CD4-positive, alpha-beta memory T cell (primary cell): ENCODE measurements at regions of chr17 and their contacts with region 1.

Region 1: GRCh38 chr17:75182569-75183450 is at the start of gene SUMO2:
- DNase-seq: peak; percentile 92 to 95 (median 94)
- H3K4me3 ChIP-seq: peak within 1 kb of the TSS; percentile 52 to 93
- H3K4me3 Mint-ChIP-seq: peak within 1 kb of the TSS; percentile 89 to 97 (median 92)
- H3K27ac ChIP-seq: peak within 1 kb of the TSS; percentile 94
- H3K27ac Mint-ChIP-seq: peak within 1 kb of the TSS; percentile 87 to 98 (median 97)
- H3K4me1 ChIP-seq: peaks cover 44% of the 10 kb centered on the region
- H3K4me1 Mint-ChIP-seq: peaks cover 20 to 47% (median 35%) of the 10 kb centered on the region in 4 donors
- H3K27me3 ChIP-seq: no peaks in the 10 kb centered on the region
- H3K27me3 Mint-ChIP-seq: no peaks in the 10 kb centered on the region
- total RNA-seq, gene SUMO2: 255 to 264 TPM

Region 2: GRCh38 chr17:75046582-75047289 is 136.1 kb before region 1 on chr17 and contains the starts of genes ATP5PD and KCTD2:
- CTCF ChIA-PET with region 1: no interaction called
- POLR2A ChIA-PET with region 1: interaction called, 11 read pairs
- intact Hi-C with region 1: no loop called
- DNase-seq: peak; percentile 92 to 95 (median 94)
- H3K4me3 ChIP-seq: peak within 1 kb of the TSS; percentile 62 to 96
- H3K4me3 Mint-ChIP-seq: peak within 1 kb of the TSS; percentile 95 to 100 (median 97)
- H3K27ac ChIP-seq: peak within 1 kb of the TSS; percentile 85
- H3K27ac Mint-ChIP-seq: peak within 1 kb of the TSS; percentile 96 to 98 (median 97)
- H3K4me1 ChIP-seq: peaks cover 30% of the 10 kb centered on the region
- H3K4me1 Mint-ChIP-seq: peaks cover 25 to 63% (median 40%) of the 10 kb centered on the region in 4 donors
- H3K27me3 ChIP-seq: no peaks in the 10 kb centered on the region
- H3K27me3 Mint-ChIP-seq: no peaks in the 10 kb centered on the region
- total RNA-seq, gene ATP5PD: 167 to 171 TPM
- total RNA-seq, gene KCTD2: 31.1 to 31.7 TPM

Region 3: DNA sequence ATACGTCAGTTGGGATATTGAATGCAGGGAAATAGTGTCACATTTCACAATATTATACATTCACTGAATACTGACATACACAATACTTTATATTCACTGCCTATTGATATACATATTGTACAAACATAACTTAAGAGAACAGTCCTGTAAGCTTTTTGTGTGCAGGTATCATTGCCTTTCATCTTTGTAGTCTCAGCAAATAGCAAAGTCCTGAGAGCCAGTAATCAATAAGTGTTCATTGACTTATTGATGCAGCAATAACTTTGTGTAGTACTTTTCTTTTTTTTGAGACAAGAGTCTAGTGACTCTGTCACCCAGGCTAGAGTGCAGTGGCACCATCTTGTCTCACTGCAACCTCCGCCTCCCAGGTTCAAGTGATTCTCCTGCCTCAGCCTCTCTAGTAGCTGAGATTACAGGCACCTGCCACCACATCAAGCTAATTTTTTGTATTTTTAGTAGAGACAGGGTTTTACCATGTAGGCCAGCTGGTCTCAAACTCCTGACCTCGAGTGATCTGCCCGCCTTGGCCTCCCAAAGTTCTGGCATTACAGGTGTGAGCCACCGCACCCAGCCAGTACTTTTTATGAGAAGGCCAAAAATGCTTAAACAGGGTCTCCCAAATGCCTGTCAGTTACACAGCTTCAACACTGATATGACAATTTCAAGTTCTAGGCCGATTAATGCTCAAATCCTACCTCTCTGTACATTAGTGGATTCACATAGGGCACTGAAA is 17.2 kb after region 1 on chr17:
- CTCF ChIA-PET with region 1: interaction called, 63 read pairs
- POLR2A ChIA-PET with region 1: interaction called, 9 read pairs
- intact Hi-C with region 1: loop called (anchors 1 kb)
- DNase-seq: no peak
- H3K4me3 ChIP-seq: no peak overlapping the region
- H3K4me3 Mint-ChIP-seq: no peak overlapping the region
- H3K27ac ChIP-seq: no peak overlapping the region
- H3K27ac Mint-ChIP-seq: no peak overlapping the region
- H3K4me1 ChIP-seq: peaks cover 10% of the 10 kb centered on the region
- H3K4me1 Mint-ChIP-seq: peaks cover 4 to 16% (median 7%) of the 10 kb centered on the region in 4 donors
- H3K27me3 ChIP-seq: no peaks in the 10 kb centered on the region
- H3K27me3 Mint-ChIP-seq: no peaks in the 10 kb centered on the region

Region 4: GRCh38 chr17:75238684-75239191 is 55.9 kb after region 1 on chr17:
- CTCF ChIA-PET with region 1: no interaction called
- POLR2A ChIA-PET with region 1: no interaction called
- intact Hi-C with region 1: no loop called
- DNase-seq: peak; percentile 58 to 68 (median 67)
- H3K4me3 ChIP-seq: no peak overlapping the region
- H3K4me3 Mint-ChIP-seq: peak overlapping the region; percentile 82 to 94 (median 87)
- H3K27ac ChIP-seq: peak overlapping the region; percentile 16
- H3K27ac Mint-ChIP-seq: peak overlapping the region; percentile 90 to 99 (median 96)
- H3K4me1 ChIP-seq: peaks cover 45% of the 10 kb centered on the region
- H3K4me1 Mint-ChIP-seq: peaks cover 24 to 43% (median 31%) of the 10 kb centered on the region in 4 donors
- H3K27me3 ChIP-seq: no peaks in the 10 kb centered on the region
- H3K27me3 Mint-ChIP-seq: no peaks in the 10 kb centered on the region

Region 5: GRCh38 chr17:75261336-75262111 is 78.7 kb after region 1 on chr17 and contains the starts of genes GGA3 and MRPS7:
- CTCF ChIA-PET with region 1: no interaction called
- POLR2A ChIA-PET with region 1: interaction called, 15 read pairs
- intact Hi-C with region 1: loop called (anchors 2 kb)
- DNase-seq: peak; percentile 95 to 99 (median 97)
- H3K4me3 ChIP-seq: peak within 1 kb of the TSS; percentile 77 to 99
- H3K4me3 Mint-ChIP-seq: peak within 1 kb of the TSS; percentile 93 to 99 (median 97)
- H3K27ac ChIP-seq: peak within 1 kb of the TSS; percentile 96
- H3K27ac Mint-ChIP-seq: peak within 1 kb of the TSS; percentile 100
- H3K4me1 ChIP-seq: peaks cover 35% of the 10 kb centered on the region
- H3K4me1 Mint-ChIP-seq: peaks cover 32 to 65% (median 48%) of the 10 kb centered on the region in 4 donors
- H3K27me3 ChIP-seq: no peaks in the 10 kb centered on the region
- H3K27me3 Mint-ChIP-seq: no peaks in the 10 kb centered on the region
- total RNA-seq, gene GGA3: 121 to 122 TPM
- total RNA-seq, gene MRPS7: 34.1 to 36.3 TPM

Region 6: GRCh38 chr17:75405365-75406221 is 222.8 kb after region 1 on chr17 and contains the start of gene GRB2:
- CTCF ChIA-PET with region 1: no interaction called
- POLR2A ChIA-PET with region 1: interaction called, 4 read pairs
- intact Hi-C with region 1: loop called (anchors 1 kb)
- DNase-seq: peak; percentile 99 to 100 (median 100)
- H3K4me3 ChIP-seq: peak within 1 kb of the TSS; percentile 88 to 92
- H3K4me3 Mint-ChIP-seq: peak within 1 kb of the TSS; percentile 96 to 99 (median 97)
- H3K27ac ChIP-seq: peak within 1 kb of the TSS; percentile 89
- H3K27ac Mint-ChIP-seq: peak within 1 kb of the TSS; percentile 91 to 99 (median 96)
- H3K4me1 ChIP-seq: peaks cover 43% of the 10 kb centered on the region
- H3K4me1 Mint-ChIP-seq: peaks cover 25 to 54% (median 37%) of the 10 kb centered on the region in 4 donors
- H3K27me3 ChIP-seq: no peaks in the 10 kb centered on the region
- H3K27me3 Mint-ChIP-seq: no peaks in the 10 kb centered on the region
- total RNA-seq, gene GRB2: 131 to 133 TPM

Region 7: DNA sequence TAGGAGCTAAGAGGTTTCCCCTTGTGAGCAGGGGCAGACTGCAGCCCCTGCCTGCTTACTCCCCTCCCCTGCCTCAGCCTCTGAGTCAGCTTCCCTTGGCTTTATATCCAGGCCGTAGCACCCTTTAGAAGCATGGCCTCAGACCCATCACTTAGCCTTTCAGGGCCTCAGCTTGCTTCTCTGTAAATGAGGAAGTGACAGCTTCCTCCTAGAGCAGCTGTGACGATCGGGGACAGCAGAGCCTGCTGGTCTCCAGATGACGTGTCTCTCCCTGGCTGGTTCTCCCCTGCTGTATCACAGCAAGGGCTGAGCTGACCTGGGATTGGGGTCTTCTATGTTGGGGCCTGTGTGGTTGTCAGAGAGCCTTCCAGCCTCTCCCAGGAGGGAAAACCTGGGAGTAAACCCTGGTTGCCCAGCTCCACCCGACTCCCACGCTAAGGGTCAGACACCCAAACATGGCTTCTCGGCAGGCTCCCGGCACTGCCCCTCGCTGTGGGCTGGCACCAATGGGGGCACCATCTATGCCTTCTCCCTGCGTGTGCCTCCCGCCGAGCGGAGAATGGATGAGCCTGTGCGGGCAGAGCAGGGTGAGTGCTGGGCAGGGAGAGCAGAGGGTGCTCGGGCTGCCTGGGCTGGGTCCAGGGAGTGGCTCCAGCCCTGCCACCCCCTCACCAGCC is 388.5 kb after region 1 on chr17:
- CTCF ChIA-PET with region 1: no interaction called
- POLR2A ChIA-PET with region 1: no interaction called
- intact Hi-C with region 1: no loop called
- DNase-seq: no peak
- H3K4me3 ChIP-seq: no peak overlapping the region
- H3K4me3 Mint-ChIP-seq: no peak overlapping the region
- H3K27ac ChIP-seq: no peak overlapping the region
- H3K27ac Mint-ChIP-seq: no peak overlapping the region
- H3K4me1 ChIP-seq: no peaks in the 10 kb centered on the region
- H3K4me1 Mint-ChIP-seq: no peaks in the 10 kb centered on the region
- H3K27me3 ChIP-seq: no peaks in the 10 kb centered on the region
- H3K27me3 Mint-ChIP-seq: no peaks in the 10 kb centered on the region